ENCODE measurements at regions of chr7 and their contacts with region 1.

Region 1: DNA sequence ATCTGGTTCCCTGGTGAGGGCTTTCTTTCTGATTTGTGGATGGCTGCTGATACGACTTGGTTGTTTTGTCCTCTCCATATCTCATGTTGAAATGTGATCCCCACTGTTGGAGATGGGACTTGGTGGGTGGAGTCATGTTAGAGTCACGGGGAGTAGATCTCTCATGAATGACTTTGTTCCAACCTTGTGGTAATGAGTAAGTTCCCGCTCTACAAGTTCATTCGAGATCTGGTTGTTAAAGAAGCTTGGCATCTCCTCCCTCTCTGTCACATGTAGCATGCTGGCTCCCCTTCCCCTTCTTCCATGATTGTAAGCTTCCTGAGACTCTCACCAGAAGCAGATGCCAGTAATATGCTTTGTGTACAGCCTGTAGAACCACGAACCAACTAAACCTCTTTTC is 37.1 kb upstream of the NXPH1 start:
- DNase-seq: no peak

Region 2: GRCh38 chr7:9937944-9938631 is 1541.8 kb after region 1 on chr7:
- intact Hi-C with region 1: loop called in 1 of 2 experiments (anchors 5 kb)
- DNase-seq: no peak